Endothelial cell of umbilical vein (primary cell): ENCODE measurements at regions of chr5 and their contacts with region 1.

Region 1: DNA sequence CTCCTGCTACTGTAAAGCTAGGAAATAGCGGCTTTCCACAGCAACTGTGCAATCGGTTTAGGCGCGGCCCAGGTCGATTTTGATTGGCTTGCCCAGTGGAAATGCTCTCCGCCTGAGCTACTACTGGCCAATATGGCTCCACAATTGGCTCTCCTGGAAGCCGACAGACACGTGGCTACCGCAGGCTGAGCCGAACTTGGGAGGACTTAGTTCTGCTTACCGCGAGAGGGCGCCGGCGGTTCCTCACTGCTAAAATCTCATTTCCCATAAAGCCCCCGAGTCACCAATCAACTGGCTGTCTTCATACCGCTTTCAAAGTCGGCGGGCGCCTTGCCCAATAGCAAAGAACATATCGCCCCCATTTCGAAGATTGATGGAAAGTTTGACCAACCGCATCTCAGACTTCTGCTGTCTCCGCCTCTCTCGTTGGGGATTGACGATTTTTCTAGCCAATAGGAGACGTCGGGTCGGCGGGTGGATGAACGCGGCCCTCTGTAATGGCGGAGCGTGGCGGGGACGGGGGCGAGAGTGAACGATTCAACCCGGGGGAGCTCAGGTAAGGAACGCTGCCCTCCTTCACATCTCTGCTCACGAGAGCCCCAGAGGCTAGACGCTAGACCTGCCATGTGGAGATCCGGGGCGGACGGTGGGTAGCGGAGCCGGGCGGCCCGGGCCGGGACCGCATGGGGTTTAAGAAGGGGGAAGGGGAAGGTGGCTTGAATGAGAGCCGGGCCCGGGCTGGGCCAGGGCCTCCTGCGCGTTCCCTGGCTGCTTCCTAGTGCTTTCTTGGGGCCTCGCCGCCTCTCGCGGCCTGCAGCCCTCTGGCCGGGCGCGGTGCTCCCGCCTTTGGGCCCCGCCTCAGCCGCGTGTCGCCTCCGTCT is at the start of gene TCERG1:
- DNase-seq: peak; percentile 100
- H3K4me3 ChIP-seq: peak within 1 kb of the TSS; percentile 64 to 85 (median 85)
- H3K27ac ChIP-seq: peak within 1 kb of the TSS; percentile 84
- H3K4me1 ChIP-seq: peaks cover 16% of the 10 kb centered on the region
- H3K27me3 ChIP-seq: no peaks in the 10 kb centered on the region
- CTCF ChIP-seq: peak; percentile 71 to 88
- POLR2A ChIP-seq: peak; percentile 76
- total RNA-seq, gene TCERG1: 82.2 and 98.4 TPM in 2 replicates

Region 2: GRCh38 chr5:146173597-146173996 is 273.5 kb before region 1 on chr5:
- CTCF ChIA-PET with region 1: no interaction called
- POLR2A ChIA-PET with region 1: no interaction called
- dilution Hi-C with region 1: no loop called
- intact Hi-C with region 1: no loop called
- DNase-seq: no peak
- H3K4me3 ChIP-seq: no peak overlapping the region
- H3K27ac ChIP-seq: no peak overlapping the region
- H3K4me1 ChIP-seq: no peaks in the 10 kb centered on the region
- H3K27me3 ChIP-seq: no peaks in the 10 kb centered on the region
- CTCF ChIP-seq: no peak
- POLR2A ChIP-seq: no peak

Region 3: DNA sequence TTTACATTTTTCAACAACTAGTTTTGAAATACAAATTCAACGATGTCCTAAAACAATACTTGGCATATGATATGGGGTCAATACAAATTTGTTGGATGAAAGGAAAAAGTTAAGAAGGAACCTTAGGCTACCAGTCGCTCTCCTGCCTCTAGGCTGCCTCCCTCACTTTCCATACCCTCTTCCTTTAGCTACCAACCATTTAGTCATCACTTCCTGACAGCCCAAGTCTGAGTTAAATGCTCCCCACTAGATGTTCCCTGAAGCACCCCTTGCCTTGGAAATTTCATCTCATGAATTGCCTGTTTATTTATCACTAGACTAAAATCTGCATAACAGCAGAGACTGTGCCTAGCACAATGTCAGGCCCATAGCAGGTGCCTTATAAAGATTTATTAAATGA is 261.9 kb before region 1 on chr5:
- CTCF ChIA-PET with region 1: no interaction called
- POLR2A ChIA-PET with region 1: no interaction called
- dilution Hi-C with region 1: no loop called
- intact Hi-C with region 1: loop called (anchors 1 kb)
- DNase-seq: peak; percentile 28
- H3K4me3 ChIP-seq: no peak overlapping the region
- H3K27ac ChIP-seq: no peak overlapping the region
- H3K4me1 ChIP-seq: peaks cover 8% of the 10 kb centered on the region
- H3K27me3 ChIP-seq: no peaks in the 10 kb centered on the region
- CTCF ChIP-seq: no peak
- POLR2A ChIP-seq: no peak

Region 4: GRCh38 chr5:146203011-146203871 is 243.9 kb before region 1 on chr5 and contains the start of gene RBM27:
- CTCF ChIA-PET with region 1: no interaction called
- POLR2A ChIA-PET with region 1: no interaction called
- dilution Hi-C with region 1: no loop called
- intact Hi-C with region 1: loop called (anchors 1 kb)
- DNase-seq: peak; percentile 99
- H3K4me3 ChIP-seq: peak within 1 kb of the TSS; percentile 93 to 97 (median 94)
- H3K27ac ChIP-seq: peak within 1 kb of the TSS; percentile 66
- H3K4me1 ChIP-seq: peaks cover 12% of the 10 kb centered on the region
- H3K27me3 ChIP-seq: no peaks in the 10 kb centered on the region
- CTCF ChIP-seq: no peak
- POLR2A ChIP-seq: peak; percentile 71
- total RNA-seq, gene RBM27: 14.9 and 17.7 TPM in 2 replicates

Region 5: GRCh38 chr5:146409054-146409671 is 37.9 kb before region 1 on chr5:
- CTCF ChIA-PET with region 1: no interaction called
- POLR2A ChIA-PET with region 1: no interaction called
- dilution Hi-C with region 1: no loop called
- intact Hi-C with region 1: no loop called
- DNase-seq: no peak
- H3K4me3 ChIP-seq: no peak overlapping the region
- H3K27ac ChIP-seq: no peak overlapping the region
- H3K4me1 ChIP-seq: no peaks in the 10 kb centered on the region
- H3K27me3 ChIP-seq: peaks cover 4 to 8% of the 10 kb centered on the region in 2 experiments
- CTCF ChIP-seq: no peak
- POLR2A ChIP-seq: no peak

Region 6: DNA sequence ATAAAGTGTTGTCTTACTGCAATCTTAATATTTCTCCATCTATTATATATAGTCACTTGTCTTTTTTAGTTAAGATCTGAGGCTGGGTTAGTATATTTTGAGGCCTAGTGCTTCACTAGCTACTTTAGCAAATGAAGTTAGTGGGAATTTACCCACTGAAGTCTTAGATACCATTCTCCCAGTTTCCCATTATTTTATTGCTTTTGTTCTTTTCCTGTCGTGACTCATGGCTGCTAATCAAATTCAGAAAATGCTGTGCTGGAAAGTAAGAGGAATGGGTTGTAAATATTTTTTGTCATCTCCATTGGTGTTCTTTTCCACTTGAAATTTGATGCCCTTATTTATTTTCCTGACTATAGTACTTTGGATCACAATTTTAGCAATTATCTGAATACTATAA is 14.2 kb after region 1 on chr5:
- CTCF ChIA-PET with region 1: interaction called, 10 read pairs
- POLR2A ChIA-PET with region 1: no interaction called
- dilution Hi-C with region 1: no loop called
- intact Hi-C with region 1: no loop called
- DNase-seq: peak; percentile 90
- H3K4me3 ChIP-seq: no peak overlapping the region
- H3K27ac ChIP-seq: peak overlapping the region; percentile 58
- H3K4me1 ChIP-seq: peaks cover 22% of the 10 kb centered on the region
- H3K27me3 ChIP-seq: no peaks in the 10 kb centered on the region
- CTCF ChIP-seq: no peak
- POLR2A ChIP-seq: no peak